ENCODE measurements at regions of chr7 and their contacts with region 1.

Region 1: DNA sequence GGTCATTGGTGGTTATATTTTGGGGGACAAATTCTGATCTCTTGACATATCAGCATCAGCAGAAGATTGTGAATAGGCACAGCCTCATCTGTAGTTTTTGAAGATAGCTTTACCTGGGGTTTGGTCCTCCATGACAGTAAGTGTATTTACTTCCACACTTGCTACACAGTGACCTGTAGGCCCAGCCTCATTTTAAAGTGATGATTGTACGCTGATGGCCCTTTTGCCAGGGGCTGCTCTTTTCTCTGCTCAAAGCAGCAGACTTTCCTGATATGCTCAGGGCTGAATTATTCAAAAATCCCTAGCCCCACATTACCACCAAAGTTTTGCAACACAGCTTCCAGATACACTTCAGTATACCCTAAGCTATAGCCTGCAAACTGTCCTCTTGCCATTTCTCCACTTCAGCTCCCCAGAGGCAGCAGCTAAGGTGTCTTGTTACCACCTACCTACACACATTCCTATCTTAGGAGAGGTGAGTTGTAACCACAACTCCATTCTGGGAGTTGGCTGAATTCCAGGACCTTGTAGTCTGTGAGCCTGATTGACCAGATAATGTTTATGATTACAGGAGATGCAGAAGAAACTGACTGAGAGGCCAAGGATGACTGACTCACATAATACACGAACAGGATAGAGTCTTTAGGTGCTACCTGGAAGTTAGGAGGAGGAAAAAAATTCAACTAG is 6.0 kb downstream of the ASB4 start:
- DNase-seq: peak; percentile 87 to 95
- H3K4me3 ChIP-seq: no peak overlapping the region
- H3K27ac ChIP-seq: no peak overlapping the region
- H3K4me1 ChIP-seq: peaks cover 28% of the 10 kb centered on the region
- H3K27me3 ChIP-seq: no peaks in the 10 kb centered on the region
- CTCF ChIP-seq: no peak

Region 2: GRCh38 chr7:95303038-95303905 is 188.5 kb before region 1 on chr7:
- CTCF ChIA-PET with region 1: no interaction called
- POLR2A ChIA-PET with region 1: interaction called, 11 read pairs
- intact Hi-C with region 1: no loop called
- DNase-seq: no peak
- H3K4me3 ChIP-seq: no peak overlapping the region
- H3K27ac ChIP-seq: no peak overlapping the region
- H3K4me1 ChIP-seq: no peaks in the 10 kb centered on the region
- H3K27me3 ChIP-seq: no peaks in the 10 kb centered on the region
- CTCF ChIP-seq: no peak

Region 3: DNA sequence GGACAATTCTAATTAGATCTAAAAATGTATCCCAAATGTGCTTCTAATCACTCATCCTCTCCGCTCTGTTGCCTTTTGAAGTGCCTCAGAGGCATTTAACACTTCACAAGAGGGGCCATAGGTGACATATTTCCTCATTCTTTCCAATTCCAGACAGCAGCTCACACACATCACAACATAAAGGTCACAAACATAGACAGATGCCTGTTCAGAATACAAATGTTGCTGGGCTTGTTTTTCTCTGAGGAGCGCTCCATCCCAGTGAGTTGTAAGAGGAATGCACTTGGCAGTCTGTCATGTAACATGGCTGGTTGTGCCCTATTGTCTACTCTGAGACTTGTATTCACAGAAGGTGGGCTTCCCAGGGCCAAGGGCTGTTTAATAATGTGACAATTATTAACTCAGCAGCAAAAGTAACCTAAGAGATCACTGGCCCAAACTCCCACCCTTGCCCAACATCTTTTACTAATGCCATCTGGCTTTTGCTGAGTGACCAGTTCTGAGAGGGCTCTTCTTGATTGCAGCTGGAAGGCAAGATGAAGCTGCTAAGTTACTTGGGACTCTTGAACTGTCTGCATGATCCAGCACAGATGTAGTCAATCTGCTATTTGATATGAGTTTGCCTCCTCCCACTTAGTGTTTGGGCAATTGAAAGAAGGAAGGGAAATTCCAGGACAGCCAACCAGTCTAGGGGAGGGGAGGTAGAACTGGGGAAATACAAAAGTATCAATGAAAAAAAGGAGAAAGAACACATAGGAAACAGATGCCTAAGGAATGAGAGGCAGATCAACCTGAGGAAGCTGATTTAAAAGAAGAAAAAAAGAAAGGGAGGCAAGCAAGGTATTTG is 70.6 kb before region 1 on chr7:
- CTCF ChIA-PET with region 1: no interaction called
- POLR2A ChIA-PET with region 1: no interaction called
- intact Hi-C with region 1: no loop called
- DNase-seq: peak; percentile 3 to 55
- H3K4me3 ChIP-seq: no peak overlapping the region
- H3K27ac ChIP-seq: no peak overlapping the region
- H3K4me1 ChIP-seq: no peaks in the 10 kb centered on the region
- H3K27me3 ChIP-seq: no peaks in the 10 kb centered on the region
- CTCF ChIP-seq: no peak